Stomach (tissue), 19 donors: ENCODE measurements at regions of chr17 and their contacts with region 1.

Region 1: GRCh38 chr17:50790618-50791017 is 23.3 kb upstream of the ANKRD40CL start:
- DNase-seq: no peak
- H3K4me3 ChIP-seq: no peak overlapping the region
- H3K27ac ChIP-seq: no peak overlapping the region
- H3K4me1 ChIP-seq: peaks cover 6 to 11% (median 6%) of the 10 kb centered on the region in 4 donors
- H3K27me3 ChIP-seq: no peaks in the 10 kb centered on the region
- CTCF ChIP-seq: no peak
- EP300 ChIP-seq: no peak
- POLR2A ChIP-seq: no peak

Region 2: DNA sequence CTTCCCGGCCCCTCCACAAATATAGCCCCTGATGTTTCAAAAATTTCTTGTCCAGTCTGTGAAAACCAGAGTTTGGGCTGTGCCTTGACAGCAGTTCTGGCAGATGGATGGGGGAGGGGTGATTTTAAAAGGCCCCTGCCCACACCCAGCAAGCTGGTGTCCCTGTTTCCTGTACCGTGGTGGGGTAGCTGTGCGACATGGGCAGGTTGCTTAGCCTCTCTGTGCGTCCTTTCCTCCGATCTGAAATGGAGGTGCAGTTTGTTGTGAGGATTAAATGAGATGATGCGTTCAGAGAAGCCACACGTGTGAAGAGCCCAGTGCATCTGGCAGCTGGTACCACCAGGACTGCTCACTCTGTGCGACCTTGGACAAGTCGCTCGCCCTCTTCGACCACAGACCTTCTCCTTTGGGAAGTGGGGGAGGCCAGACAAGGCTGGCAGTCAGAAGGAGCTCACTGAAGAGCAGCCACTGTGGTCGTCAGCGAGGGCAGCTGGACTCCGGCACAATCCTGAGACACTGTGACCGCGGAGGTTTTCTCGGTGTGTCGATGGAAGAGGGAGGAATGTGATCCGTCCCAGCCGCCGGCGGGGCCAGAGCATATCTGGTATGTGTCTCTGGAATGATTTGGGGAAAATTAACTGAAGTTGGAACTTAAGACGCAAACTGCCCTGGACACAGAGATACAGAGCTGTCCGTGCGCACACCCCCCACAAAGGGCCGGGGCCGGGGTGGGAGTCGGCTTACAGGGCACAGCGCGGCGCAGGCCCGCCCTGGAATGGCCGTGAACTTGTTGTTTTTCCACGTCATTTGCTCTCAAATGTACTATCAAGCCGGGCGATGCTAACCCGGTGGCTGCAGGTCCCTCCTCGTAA is 44.0 kb after region 1 on chr17:
- intact Hi-C with region 1: loop called (anchors 5 kb)
- DNase-seq: peak in 1 of 2 donors; percentile 77
- H3K4me3 ChIP-seq: peak overlapping the region; percentile 21 to 31 (median 27)
- H3K27ac ChIP-seq: peak overlapping the region in 1 of 5 donors; percentile 40
- H3K4me1 ChIP-seq: peaks cover 7 to 36% (median 19%) of the 10 kb centered on the region in 4 donors
- H3K27me3 ChIP-seq: peaks cover 0 to 37% (median 8%) of the 10 kb centered on the region in 3 donors
- CTCF ChIP-seq: no peak
- EP300 ChIP-seq: no peak
- POLR2A ChIP-seq: no peak